ENCODE measurements at regions of chr13 and their contacts with region 1.

Region 1: GRCh38 chr13:36395280-36395679 is 37.0 kb upstream of the CCNA1 start:
- DNase-seq: peak in 1 of 42 donors; percentile 13

Region 2: GRCh38 chr13:36346222-36347083 is 48.8 kb before region 1 on chr13 and contains the start of gene SPART:
- intact Hi-C with region 1: loop called (anchors 2 kb)
- DNase-seq: peak; percentile 91 to 99 (median 96)

Region 3: DNA sequence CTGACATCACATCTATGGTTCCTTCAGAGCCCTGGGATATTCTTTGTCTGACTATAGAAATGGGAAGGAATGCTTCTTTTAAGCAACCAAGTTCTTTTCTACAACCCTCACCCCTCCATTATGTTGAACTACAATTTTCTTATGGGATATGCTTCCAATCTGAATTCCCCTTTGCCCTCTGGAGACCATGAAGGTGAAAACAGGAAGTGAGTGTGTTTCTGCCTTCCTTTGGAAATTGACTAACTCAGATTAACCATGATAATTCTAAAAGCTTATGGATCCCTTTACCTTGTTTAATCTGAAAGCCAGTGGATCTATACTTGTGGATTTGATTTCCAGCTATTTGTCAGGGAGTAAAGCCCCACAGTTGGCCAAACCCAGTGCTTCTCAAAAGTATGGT is 187.7 kb after region 1 on chr13:
- intact Hi-C with region 1: no loop called
- DNase-seq: no peak

Region 4: DNA sequence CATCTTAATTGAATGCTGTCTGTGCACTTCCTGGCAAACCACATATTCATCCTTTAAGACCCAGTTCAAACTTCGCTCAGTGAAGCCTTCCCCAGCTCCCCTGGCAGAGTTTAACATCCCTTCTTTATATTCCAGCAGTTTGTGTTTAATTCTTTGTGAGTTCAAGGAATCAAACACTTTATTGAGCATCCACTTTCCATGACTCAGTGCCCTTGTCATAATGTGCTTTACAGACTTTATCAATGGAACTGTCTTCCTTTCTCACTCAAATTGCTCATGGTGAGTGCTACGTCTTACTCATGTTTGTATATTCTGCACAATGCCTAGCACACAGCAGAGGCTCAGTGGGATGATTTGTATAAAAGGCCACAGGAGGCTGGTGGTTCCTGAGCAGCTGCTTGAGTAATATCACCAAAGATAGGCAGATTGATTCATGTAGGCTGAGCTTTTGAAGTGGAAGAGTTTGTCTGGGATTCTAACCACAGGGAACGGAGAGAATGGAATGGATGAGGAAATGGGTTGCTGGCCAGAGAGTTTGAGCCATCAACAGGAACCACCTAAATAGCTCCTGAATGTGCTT is 322.8 kb after region 1 on chr13:
- intact Hi-C with region 1: no loop called
- DNase-seq: no peak

Region 5: DNA sequence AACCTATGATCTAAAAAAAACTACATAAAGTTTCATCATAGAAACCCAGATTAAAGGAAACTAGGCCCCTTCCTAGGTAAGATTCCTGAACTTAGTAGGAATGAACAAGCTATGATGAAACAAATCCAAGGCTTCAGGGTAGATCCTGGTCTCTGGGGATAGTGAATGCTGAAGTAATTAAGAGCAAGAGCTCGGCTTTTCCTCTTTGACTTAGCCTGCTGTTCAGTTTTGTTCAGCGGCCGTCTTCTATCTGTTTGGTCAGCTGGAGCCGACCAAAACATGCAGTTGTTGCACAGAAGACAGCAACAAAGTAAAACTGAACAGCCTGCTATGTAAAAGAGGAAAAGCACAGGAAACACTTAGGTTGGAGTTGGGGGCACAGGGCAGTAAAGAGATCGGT is 379.7 kb after region 1 on chr13:
- intact Hi-C with region 1: no loop called
- DNase-seq: no peak